HEK293 (cell line): ENCODE measurements at regions of chr6 and their contacts with region 1.

Region 1: DNA sequence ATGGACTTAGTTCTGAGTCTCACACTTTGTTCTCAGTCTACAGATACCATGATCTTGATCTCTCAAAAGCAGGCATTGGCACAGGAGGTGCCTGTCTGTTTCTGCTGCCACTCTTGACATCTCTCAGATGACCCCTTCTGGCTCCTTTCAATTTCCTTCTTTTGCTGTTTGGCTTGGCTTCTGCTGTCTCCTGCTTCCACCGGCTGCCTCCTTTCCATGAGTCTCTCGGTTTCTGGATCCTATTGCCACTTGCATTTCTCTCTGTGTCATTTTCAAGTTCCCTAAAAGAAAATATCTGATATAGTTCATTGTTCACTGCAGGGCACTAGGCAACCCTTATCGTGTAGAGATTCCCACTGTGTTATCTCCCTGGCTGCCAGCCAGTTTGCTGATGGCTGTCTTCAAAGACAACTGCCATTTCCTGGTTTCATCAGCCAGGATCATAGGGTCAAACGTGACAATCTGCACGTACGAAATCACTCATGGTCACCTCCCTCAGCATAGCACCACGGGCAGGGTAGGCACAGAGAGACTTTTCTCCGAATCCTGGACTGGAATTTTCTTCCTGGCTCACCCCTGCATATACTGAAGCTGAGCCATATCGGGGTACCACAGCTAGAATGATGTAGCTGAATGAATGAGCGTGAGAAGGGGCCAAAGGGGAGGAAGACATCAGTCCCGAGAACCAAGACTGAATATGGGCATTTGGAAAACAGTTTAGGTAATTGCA is 144.6 kb upstream of the TMEM170B start:
- H3K4me3 ChIP-seq: no peak overlapping the region
- H3K27ac ChIP-seq: no peak overlapping the region
- H3K4me1 ChIP-seq: peaks cover 4% of the 10 kb centered on the region; the same call in 1 of the 2 replicates
- CTCF ChIP-seq: no peak

Region 2: GRCh38 chr6:11434565-11435326 is 41.8 kb after region 1 on chr6:
- CTCF ChIA-PET with region 1: no interaction called
- POLR2A ChIA-PET with region 1: interaction called, 13 read pairs
- H3K4me3 ChIP-seq: no peak overlapping the region
- H3K27ac ChIP-seq: peak overlapping the region; percentile 32
- H3K4me1 ChIP-seq: peaks cover 34% of the 10 kb centered on the region
- CTCF ChIP-seq: no peak